Psoas muscle (tissue), 8 donors: ENCODE measurements at regions of chr3 and their contacts with region 1.

Region 1: DNA sequence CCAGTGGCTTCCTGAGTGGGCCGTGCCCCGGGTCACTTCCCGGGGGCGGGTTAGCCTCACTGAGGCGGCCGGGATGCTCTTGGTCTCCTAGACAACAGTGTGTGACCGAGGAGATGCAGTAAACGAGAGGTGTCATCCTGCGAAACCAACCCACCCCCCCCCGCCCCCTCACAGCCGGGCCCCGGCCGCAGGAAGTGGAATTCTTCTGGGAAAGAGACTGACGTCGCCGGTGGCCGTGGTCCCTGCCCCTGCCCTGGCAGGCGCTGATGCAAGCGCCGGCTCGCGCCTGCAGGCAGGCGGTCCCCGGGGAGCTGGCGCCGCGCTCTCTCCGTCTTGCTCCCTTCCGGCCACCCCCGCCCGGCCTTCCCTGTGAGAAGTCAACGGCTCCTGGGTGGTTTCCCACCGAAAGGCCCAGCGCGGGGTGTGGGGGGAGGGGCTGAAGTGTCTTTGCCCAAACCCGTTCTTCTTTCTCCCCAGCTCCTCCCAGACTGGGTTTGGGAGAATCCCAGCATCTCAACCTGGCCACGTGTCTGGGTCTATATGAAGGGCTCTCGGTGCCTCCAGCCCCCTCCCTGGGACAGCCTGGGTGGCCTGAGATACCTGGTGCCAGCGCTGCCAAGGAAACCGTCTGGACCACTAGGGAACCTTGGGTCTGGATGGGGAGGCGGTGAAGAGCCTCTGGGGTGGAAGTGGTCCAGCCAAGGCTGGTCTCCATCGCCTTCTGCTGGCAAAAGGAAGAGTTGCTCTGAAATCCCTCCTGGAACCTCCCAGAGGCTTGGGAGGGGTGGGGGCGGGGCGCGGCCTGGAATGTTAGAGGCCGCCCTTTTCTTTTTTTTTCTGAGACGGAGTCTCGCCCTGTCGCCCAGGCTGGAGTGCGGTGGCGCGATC is 47.3 kb downstream of the BHLHE40 start:
- DNase-seq: peak; percentile 92 to 93
- ATAC-seq: peak; percentile 77 to 94 (median 82)
- H3K4me3 ChIP-seq: peak overlapping the region; percentile 63
- H3K27ac ChIP-seq: peak overlapping the region; percentile 80
- H3K4me1 ChIP-seq: peaks cover 6% of the 10 kb centered on the region
- H3K27me3 ChIP-seq: no peaks in the 10 kb centered on the region
- CTCF ChIP-seq: peak; percentile 57

Region 2: DNA sequence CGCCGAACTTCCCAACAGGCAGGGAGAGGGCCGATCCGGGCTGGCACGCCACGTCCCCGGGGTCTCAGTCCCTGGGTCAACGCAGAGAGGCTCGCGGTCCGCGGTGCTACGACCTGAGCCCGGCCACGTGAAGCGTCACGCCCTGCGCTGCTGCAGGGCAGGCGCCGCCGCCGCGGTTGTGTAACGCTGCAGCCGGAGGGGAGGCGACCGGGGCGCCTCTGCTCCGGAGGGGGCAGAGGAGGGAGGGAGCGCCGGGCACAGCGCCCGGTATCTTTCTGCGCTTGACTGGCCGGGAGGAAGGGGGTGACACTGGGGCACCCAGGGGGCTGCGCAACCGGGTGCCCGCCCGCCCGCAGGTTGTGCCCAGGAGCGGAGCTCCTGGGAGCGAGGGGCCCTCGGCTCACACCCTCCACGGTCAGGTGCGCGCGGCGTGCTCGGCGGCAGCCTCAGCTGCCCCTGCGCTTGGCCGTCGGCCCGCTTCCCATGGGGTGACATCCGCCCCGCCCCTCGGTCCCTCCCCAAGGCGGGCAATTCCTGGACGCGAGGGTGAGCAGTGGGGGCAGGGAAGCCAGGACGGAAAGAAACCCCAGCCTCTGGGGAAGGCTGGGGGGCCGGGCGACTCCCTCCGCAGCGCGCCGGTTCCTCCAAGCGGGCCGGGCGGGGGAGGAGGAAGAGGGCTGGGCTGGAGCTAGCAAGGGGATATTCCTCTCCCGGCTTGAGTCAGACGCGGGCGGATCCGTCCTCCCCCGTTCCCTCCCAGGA is 48.2 kb before region 1 on chr3:
- intact Hi-C with region 1: loop called (anchors 2 to 5 kb)
- DNase-seq: peak; percentile 98
- ATAC-seq: peak; percentile 63 to 75 (median 70)
- H3K4me3 ChIP-seq: peak overlapping the region; percentile 99
- H3K27ac ChIP-seq: peak overlapping the region; percentile 100
- H3K4me1 ChIP-seq: peaks cover 17% of the 10 kb centered on the region
- H3K27me3 ChIP-seq: no peaks in the 10 kb centered on the region
- CTCF ChIP-seq: no peak

Region 3: GRCh38 chr3:4986782-4987537 is 39.6 kb before region 1 on chr3:
- intact Hi-C with region 1: loop called (anchors 2 to 5 kb)
- DNase-seq: peak; percentile 98 to 99
- ATAC-seq: peak; percentile 68 to 83 (median 78)
- H3K4me3 ChIP-seq: peak overlapping the region; percentile 99
- H3K27ac ChIP-seq: peak overlapping the region; percentile 100
- H3K4me1 ChIP-seq: peaks cover 53% of the 10 kb centered on the region
- H3K27me3 ChIP-seq: no peaks in the 10 kb centered on the region
- CTCF ChIP-seq: no peak